ENCODE measurements at regions of chr10 and their contacts with region 1.

Region 1: GRCh38 chr10:29811751-29812449 is 177.1 kb upstream of the SVIL start:
- DNase-seq: peak in 1 of 2 donors; percentile 61
- ATAC-seq: peak; percentile 61 to 95 (median 86)
- H3K4me3 ChIP-seq: no peak overlapping the region
- H3K27ac ChIP-seq: peak overlapping the region in 8 of 10 donors; percentile 7 to 86 (median 74)
- H3K4me1 ChIP-seq: peaks cover 7 to 25% (median 16%) of the 10 kb centered on the region in 9 donors
- H3K27me3 ChIP-seq: no peaks in the 10 kb centered on the region
- CTCF ChIP-seq: no peak

Region 2: GRCh38 chr10:28367929-28368484 is 1443.9 kb before region 1 on chr10:
- intact Hi-C with region 1: no loop called
- DNase-seq: no peak
- ATAC-seq: peak in 5 of 8 donors; percentile 38 to 62 (median 52)
- H3K4me3 ChIP-seq: no peak overlapping the region
- H3K27ac ChIP-seq: peak overlapping the region in 1 of 10 donors; percentile 62
- H3K4me1 ChIP-seq: peaks cover 0 to 33% (median 0%) of the 10 kb centered on the region in 9 donors
- H3K27me3 ChIP-seq: peaks cover 0 to 4% (median 0%) of the 10 kb centered on the region in 7 donors
- CTCF ChIP-seq: no peak

Region 3: GRCh38 chr10:29740981-29741545 is 70.8 kb before region 1 on chr10:
- intact Hi-C with region 1: loop called in 1 of 10 experiments (anchors 5 kb)
- DNase-seq: no peak
- ATAC-seq: peak in 1 of 8 donors; percentile 39
- H3K4me3 ChIP-seq: no peak overlapping the region
- H3K27ac ChIP-seq: peak overlapping the region in 9 of 10 donors; percentile 4 to 75 (median 66)
- H3K4me1 ChIP-seq: peaks cover 0 to 22% (median 12%) of the 10 kb centered on the region in 9 donors
- H3K27me3 ChIP-seq: no peaks in the 10 kb centered on the region
- CTCF ChIP-seq: no peak

Measured in heart right ventricle (tissue), 16 donors.